CD8-positive, alpha-beta memory T cell (primary cell): ENCODE measurements at regions of chr2 and their contacts with region 1.

Region 1: DNA sequence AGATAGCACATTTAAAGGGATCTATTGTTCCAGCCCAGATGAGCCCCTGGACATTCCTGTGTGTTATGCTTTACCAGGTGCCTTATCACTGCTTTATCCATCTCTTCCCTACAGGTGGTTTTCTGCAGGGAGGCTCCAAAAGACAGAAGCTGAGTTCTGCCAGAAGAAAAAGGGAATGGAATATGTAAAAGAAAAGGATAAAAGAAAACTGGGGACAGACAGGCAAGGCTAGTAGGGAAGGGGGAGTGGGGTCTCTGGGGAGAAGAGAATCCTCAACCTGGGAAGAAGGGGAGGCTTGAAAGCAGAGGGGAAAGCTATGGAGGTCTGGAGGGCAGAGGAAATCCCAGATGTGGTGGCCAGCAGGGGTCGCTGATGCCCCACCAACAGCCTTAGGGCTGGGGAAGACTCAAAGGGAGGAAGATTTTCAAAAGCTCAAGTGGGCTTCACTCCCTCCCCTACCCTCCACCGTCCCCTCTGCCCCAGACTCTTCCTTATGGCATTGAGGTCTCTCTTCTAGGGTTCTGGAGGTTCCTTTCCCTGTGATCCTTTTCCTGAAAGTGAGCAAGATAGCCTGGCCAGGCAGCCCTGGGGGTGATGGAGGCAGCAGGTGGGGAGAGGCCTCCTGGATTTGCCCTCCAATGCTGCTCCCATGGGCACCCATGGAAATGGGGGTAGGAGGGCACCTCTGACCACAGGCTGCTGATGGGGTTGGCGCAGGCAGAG is 178.1 kb upstream of the PKDCC start:
- DNase-seq: peak; percentile 49 to 74 (median 68)
- H3K4me3 ChIP-seq: no peak overlapping the region
- H3K4me3 Mint-ChIP-seq: no peak overlapping the region
- H3K27ac ChIP-seq: no peak overlapping the region
- H3K27ac Mint-ChIP-seq: peak overlapping the region in 1 of 8 donors; percentile 14
- H3K4me1 ChIP-seq: no peaks in the 10 kb centered on the region
- H3K4me1 Mint-ChIP-seq: peaks cover 34 to 61% (median 38%) of the 10 kb centered on the region in 3 donors
- H3K27me3 ChIP-seq: no peaks in the 10 kb centered on the region
- H3K27me3 Mint-ChIP-seq: peaks cover 3 to 7% of the 10 kb centered on the region in 2 donors

Region 2: DNA sequence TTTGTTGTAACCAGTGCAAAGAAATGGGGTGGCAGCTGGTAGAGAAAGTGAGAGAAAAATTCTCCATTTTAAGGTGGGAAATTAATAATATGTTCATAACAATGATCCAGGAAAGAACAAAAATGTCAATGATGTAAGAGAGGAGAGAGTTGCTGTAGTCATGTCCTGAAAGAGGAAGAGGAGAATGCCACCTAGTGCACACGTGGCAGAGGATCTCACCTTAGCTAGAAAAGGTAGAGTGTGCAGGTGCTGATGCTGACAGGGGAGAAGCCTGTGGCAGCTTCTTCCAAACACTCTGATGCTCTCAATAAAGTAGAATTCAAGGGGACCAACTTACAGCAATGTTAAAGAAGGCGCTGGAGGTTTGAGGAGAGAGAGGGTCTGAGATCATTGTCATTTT is 104.8 kb before region 1 on chr2:
- CTCF ChIA-PET with region 1: no interaction called
- POLR2A ChIA-PET with region 1: no interaction called
- DNase-seq: no peak
- H3K4me3 ChIP-seq: no peak overlapping the region
- H3K4me3 Mint-ChIP-seq: no peak overlapping the region
- H3K27ac ChIP-seq: no peak overlapping the region
- H3K27ac Mint-ChIP-seq: no peak overlapping the region
- H3K4me1 ChIP-seq: no peaks in the 10 kb centered on the region
- H3K4me1 Mint-ChIP-seq: no peaks in the 10 kb centered on the region
- H3K27me3 ChIP-seq: no peaks in the 10 kb centered on the region
- H3K27me3 Mint-ChIP-seq: peaks cover 11 to 12% of the 10 kb centered on the region in 2 donors

Region 3: GRCh38 chr2:41896186-41896846 is 26.6 kb after region 1 on chr2:
- CTCF ChIA-PET with region 1: interaction called, 32 read pairs
- POLR2A ChIA-PET with region 1: no interaction called
- DNase-seq: peak in 4 of 5 donors; percentile 12 to 79 (median 48)
- H3K4me3 ChIP-seq: no peak overlapping the region
- H3K4me3 Mint-ChIP-seq: peak overlapping the region; percentile 3 to 87 (median 71)
- H3K27ac ChIP-seq: no peak overlapping the region
- H3K27ac Mint-ChIP-seq: peak overlapping the region; percentile 80 to 97 (median 88)
- H3K4me1 ChIP-seq: peaks cover 27% of the 10 kb centered on the region
- H3K4me1 Mint-ChIP-seq: peaks cover 54 to 63% (median 55%) of the 10 kb centered on the region in 3 donors
- H3K27me3 ChIP-seq: no peaks in the 10 kb centered on the region
- H3K27me3 Mint-ChIP-seq: peaks cover 0 to under 1% of the 10 kb centered on the region in 2 donors